Posterior cingulate gyrus (tissue), 11 donors: ENCODE measurements at regions of chr1 and their contacts with region 1.

Region 1: GRCh38 chr1:198595765-198596164 is 43.1 kb upstream of the PTPRC start:
- DNase-seq: no peak

Region 2: GRCh38 chr1:198612471-198613260 is 16.9 kb after region 1 on chr1:
- intact Hi-C with region 1: loop called (anchors 1 kb)
- DNase-seq: no peak